ENCODE measurements at regions of chr6 and their contacts with region 1.

Region 1: DNA sequence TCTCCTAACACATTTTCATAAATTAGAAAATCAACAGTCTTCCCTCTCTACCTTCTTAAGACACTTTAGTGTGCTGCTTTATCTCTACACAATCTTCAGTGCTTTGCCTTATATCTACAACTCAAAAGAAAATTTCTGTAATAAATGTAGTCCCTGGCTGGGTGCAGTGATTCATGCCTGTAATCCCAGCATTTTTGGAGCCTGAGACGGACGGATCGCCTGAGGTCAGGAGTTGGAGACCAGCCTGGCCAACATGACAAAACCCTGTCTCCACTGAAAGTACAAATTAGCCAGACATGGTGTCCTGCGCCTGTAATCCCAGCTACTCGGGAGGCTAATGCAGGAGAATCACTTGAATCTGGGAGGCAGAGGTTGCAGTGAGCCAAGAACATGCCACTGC is 9.7 kb upstream of the EDN1 start:
- DNase-seq: peak in 1 of 2 donors; percentile 26
- ATAC-seq: no peak
- H3K4me3 ChIP-seq: no peak overlapping the region
- H3K27ac ChIP-seq: no peak overlapping the region
- H3K4me1 ChIP-seq: no peaks in the 10 kb centered on the region
- H3K27me3 ChIP-seq: peaks cover 0 to 4% (median 0%) of the 10 kb centered on the region in 3 donors
- CTCF ChIP-seq: no peak

Region 2: DNA sequence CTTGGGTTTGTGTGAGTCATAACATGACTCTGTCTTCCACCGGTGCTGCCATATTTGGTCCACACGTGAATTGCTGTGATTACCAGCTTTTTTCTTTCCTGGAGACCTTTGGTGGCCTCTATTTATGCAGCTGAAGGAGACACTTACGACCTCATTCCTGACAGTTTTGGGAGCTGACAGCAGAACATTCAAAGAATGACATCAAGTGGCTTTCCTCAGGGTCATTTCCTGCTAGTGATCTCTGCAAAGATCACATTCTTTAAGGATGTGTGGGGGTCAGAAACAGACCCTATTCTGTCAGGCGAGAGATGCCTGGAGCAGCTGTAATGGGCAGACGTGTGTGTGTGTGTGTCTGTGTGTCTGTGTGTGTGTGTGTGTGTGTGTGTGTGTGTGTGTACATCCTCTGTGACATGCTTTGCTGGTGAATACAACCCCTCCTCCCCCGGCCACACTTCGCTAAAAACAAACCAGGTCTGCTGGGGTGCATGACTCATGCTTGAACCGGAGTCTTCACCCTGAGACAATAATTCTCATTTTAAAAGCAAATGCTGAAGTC is 627.4 kb before region 1 on chr6:
- intact Hi-C with region 1: loop called in 1 of 2 experiments (anchors 5 kb)
- DNase-seq: no peak
- ATAC-seq: peak in 3 of 4 donors; percentile 24 to 41 (median 40)
- H3K4me3 ChIP-seq: no peak overlapping the region
- H3K27ac ChIP-seq: no peak overlapping the region
- H3K4me1 ChIP-seq: peaks cover 14% of the 10 kb centered on the region
- H3K27me3 ChIP-seq: no peaks in the 10 kb centered on the region
- CTCF ChIP-seq: no peak

Region 3: DNA sequence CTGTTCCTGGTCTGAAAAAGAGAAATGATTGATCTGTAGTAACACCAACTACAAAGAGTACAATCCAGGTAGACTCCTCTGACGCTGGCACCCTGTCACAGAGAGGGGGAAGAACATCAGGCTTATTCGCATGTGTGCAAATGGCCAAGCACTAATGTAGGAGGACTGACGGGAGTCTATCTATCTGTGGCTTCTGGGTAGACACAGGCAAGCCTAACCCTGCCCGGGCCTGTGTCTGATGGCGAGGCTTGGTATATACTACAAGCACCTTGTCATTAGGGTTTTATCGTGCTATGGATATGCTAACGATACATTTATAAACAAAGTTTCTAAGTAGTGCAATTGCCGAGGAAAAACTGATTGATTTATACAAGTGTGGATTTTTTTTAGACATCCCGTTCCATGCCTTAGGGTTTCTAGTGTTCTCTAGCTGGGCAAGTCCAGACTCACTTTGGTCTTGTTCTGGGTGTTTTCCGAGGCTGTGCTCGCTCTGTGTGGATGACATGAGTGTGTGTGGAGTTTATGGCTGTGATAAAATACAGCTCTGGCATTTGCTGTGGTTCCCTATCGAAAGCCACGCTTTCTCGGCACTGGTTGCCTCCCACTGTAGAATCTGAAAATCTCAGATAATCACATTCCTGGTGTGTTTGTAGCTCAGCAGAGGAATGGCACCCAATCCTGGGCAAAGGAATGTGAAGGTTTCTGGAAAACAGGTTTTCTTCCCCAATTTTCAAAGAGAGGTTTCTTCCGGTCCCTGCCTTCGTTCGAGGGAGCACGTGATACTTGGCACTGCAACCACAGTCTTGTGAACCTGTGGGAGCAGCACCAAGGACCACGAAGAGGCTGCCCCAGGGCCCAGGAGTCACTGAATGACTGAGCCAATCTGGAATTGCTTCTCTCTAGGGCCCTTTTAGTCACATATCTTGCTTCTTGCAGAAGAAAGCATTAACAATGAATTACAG is 57.8 kb before region 1 on chr6:
- intact Hi-C with region 1: no loop called
- DNase-seq: no peak
- ATAC-seq: no peak
- H3K4me3 ChIP-seq: no peak overlapping the region
- H3K27ac ChIP-seq: no peak overlapping the region
- H3K4me1 ChIP-seq: no peaks in the 10 kb centered on the region
- H3K27me3 ChIP-seq: peaks cover 0 to 5% (median 0%) of the 10 kb centered on the region in 3 donors
- CTCF ChIP-seq: no peak